Activated naive CD4-positive, alpha-beta T cell treated with anti-CD3 and anti-CD28 coated beads, Interleukin-2, amount 10 ng/mL, durations not matched to agents 7 days and 5 days (primary cell): ENCODE measurements at regions of chr22 and their contacts with region 1.

Region 1: DNA sequence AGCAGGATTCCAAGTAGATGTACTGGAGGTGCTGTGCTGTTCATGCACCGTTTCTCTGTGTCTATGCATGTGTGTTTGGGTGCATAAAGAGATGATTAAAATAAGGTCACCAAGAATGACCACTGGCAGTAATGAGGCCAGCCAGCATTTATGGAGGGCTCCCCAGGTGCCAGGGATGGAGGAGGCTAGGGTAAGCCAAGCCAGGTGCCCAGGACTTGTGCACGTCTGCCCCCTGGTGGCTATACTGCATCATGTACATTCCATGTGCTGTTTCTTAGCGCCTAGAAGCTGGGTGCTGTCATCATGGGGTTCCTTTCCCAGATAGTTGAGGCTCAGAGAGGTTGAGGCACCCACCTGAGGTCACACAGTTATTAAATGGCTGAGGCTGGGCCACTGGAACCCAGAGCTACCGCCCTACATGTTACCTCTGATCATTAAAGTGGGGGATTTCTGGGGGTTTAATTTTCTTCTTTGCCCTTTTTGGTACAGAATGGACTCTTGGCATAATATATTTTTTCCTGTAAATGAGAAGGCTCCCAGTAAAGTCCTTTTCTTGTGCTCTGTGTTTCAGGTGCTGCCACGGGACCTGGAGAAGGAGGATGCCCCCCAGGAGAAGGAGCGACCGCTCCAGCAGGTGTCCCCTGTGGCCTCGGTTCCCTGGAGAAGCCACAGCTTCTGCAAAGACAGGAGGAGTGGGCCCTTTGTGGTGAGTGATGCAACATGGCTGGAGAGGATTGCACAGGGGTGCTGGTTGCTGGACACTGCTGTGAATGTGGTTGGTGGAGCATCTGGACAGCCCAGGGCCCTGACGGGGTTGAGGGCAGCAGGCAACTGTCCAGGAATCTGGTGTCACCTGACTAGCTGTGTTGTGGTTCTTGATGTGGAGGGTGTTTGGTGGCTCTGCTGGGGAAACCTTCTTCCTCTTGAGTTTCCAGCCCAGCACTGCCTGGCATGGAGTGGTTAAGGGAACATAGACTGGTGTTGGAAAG is 96.4 kb downstream of the KIAA1671 start:
- DNase-seq: peak; percentile 83
- H3K4me3 Mint-ChIP-seq: no peak overlapping the region
- H3K27ac Mint-ChIP-seq: no peak overlapping the region
- H3K4me1 Mint-ChIP-seq: peaks cover 4% of the 10 kb centered on the region
- H3K27me3 Mint-ChIP-seq: peaks cover 11% of the 10 kb centered on the region

Region 2: GRCh38 chr22:24736526-24737053 is 312.4 kb before region 1 on chr22:
- CTCF ChIA-PET with region 1: no interaction called
- DNase-seq: no peak
- H3K4me3 Mint-ChIP-seq: no peak overlapping the region
- H3K27ac Mint-ChIP-seq: no peak overlapping the region
- H3K4me1 Mint-ChIP-seq: no peaks in the 10 kb centered on the region
- H3K27me3 Mint-ChIP-seq: peaks cover 21% of the 10 kb centered on the region

Region 3: DNA sequence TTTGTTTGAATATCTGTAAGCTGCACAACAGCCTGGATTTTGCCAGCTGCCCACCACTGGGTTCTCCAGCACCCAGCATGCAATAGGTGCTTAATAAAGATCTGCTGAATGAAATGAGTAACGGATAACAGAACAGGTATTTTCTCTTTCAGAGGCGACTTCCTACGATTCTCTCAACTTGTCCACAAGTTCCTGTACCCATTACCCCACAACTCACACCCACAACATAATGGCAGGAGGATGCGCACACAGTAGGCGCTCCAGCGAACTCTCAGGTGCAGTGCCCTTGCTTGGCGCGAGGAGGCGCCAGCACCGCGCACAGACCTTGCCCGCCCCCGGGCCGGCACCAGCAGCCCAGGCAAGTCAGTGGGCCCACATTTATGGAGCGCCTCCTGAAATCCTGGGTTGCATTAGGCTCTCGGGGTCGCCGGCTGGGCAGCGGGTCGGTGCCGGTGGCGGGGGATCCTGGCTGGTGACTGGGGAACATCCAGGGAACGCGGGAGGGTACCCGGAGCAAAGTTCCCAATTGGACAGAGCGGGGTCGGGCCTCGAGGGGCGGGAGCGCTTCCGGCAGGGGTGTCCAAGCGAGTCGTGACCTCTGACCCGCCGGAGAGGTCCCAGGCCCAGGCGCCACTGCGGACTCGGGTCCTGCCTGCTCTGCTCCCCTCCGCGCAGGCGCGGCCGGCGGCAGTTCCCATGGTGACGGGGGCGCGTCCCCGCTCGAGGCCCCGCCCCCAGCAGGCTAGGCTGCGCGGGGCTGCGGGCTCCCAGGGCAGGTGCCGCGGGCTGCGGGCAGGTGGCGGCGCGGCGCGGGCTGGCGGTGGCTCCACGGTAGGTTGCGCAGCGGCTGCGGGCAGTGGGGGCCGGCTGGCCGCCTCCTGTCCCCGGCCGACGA is 96.8 kb before region 1 on chr22 and contains the start of gene KIAA1671:
- CTCF ChIA-PET with region 1: interaction called, 115 read pairs
- DNase-seq: peak; percentile 90
- H3K4me3 Mint-ChIP-seq: peak within 1 kb of the TSS; percentile 76
- H3K27ac Mint-ChIP-seq: peak within 1 kb of the TSS; percentile 47
- H3K4me1 Mint-ChIP-seq: peaks cover 33% of the 10 kb centered on the region
- H3K27me3 Mint-ChIP-seq: peaks cover 75% of the 10 kb centered on the region